GM18951 (cell line): ENCODE measurements at regions of chr10 and their contacts with region 1.

Region 1: DNA sequence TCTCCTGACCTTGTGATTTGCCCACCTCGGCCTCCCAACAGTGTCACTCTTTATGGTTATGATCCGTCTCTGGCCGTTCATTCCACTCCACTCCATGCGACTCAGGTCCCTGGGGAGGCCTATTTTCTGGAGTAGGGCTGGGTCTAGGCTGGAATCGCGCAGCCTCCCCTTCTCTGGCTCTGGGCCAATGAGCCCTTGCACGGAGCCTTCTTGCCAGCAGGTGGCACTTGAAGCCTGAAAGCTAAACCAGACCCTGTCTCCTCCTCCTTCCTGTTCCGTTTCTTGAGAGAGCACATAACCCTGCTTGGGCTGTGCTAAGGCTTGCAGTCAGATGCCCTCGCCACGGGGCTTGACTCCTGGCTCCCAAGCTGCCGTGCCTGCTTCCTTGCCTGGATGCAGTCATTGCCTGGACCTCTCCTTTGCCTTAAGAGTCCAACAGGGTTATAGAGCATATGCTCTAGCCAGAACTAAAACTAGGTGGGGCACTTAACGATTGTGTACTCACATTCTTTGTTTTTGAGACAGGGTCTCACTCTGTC is 9.6 kb upstream of the DNAJB12 start:
- POLR2A ChIP-seq: peak; percentile 62

Region 2: DNA sequence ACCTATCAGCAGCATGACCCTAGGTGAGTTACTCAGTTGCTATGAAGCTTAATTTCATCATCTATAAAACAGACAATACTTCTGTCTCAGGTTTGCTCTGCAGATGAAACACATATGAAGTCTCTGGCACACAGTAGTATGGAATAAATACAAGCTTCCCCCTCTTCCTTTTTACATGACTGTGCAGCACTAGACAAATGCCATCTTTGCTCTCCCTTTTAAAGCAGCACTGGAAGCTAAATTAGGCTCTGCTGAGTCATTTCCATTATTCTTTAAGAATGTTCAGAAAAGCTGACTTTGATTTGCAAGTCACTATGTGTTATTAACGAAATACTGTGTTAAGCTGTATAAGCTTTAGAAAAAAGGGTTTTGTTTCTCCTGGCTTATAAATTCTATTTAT is 189.1 kb before region 1 on chr10:
- in situ Hi-C with region 1: no loop called
- POLR2A ChIP-seq: no peak

Region 3: DNA sequence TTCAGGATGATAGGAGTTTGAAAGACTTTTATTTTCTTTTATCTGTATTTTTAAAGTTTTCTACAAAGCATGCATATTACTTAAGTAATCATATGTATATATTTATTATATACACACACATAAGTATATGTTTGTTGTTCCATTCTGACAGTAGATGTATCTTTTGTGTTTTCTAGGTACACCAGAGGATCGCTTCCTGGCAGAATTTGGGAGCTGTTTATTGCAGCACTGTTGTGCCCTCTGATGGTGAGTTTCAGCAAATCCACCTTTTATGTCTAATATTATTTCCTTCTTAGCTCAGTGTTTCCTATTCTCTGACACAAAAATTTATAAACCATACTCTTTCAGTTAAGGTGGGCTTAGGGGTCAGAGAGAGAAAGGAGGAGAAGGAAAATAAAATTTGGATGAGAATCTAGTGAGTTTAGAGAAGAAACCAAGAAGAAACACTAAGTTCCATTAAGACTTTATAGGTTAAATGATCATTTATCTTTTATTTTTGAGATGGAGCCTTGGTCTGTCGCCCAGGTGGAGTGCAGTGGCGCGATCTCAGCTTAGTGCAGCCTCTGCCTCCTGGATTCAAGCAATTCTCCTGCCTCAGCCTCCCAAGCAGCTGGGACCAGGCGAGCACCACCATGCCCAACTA is 470.0 kb after region 1 on chr10:
- in situ Hi-C with region 1: loop called (anchors 5 kb)
- POLR2A ChIP-seq: no peak

Region 4: DNA sequence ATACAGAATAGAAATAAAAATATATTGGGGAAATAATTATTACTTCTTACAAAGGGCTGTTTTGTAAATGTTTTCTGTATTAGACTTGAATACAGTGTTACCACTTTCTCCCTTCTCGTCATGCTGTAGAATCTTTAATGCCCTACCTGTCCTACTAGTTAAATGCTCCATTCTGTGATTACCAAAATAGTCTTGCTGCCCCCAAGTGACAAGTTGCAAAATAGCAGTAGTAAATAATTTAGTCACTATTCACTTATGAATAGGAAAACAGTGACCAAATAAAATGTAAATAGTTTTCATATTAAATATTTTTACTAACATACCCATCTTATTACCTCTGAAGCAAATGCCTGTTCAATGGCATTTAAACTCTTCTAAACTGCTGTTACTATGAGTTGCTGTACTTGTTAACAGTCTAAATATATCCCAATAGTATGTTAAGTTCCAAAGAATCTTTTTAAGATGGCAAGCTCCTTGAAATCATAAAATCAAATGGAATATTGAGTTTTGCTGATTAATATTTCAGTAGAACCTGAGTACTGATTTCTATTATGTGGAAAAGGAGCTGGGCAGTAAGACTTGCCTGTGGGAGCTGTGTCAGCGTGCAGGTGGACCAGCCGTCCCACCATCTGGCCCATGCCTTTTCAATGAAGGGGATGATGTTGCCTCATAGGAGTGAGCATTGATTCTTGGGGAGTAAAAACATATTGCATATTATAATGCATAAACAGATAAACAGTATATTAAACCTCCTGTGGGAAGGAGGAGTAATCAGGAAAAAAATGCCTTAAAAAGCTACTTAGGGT is 511.1 kb after region 1 on chr10:
- in situ Hi-C with region 1: loop called (anchors 10 kb)
- POLR2A ChIP-seq: no peak